ENCODE measurements at regions of chr5 and their contacts with region 1.

Region 1: DNA sequence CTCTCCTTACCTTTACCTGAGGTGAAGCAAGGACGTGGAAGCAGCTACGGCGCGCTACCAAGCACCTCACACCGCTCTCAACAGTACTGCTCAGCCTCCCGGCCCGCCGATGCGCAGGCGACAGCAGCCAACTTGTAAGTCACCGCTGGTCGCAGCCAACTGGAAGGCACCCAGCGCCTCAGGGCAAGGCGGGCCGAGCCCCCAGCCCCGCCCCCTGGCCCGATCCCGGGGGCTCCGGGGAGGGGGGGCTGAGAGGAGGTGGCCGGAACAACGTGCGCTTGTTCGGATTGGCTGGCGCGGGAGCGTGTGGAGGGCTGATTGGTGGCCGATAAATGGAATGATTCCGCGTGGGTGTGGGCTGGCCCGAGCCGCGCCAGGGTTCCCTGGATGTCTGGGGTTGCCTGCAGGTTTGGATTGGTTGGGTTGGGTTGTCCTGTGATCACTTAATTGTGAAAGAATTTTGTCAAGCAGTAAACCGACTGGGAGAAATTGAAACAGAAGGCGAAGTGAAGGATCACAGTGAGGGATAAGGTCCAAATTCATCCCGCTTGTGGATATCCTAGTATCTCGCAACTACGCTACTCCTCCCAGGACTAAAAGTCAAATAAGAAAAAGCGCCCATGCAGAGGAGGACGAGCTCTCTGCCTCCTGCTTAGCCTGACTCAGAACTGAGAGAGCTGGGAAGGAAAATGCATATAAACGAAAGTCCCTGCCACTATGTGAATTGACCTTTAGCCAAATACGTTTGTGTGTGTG is at the start of gene STARD4:
- DNase-seq: peak; percentile 95
- ATAC-seq: peak; percentile 96
- H3K4me3 ChIP-seq: peak within 1 kb of the TSS; percentile 86
- H3K27ac ChIP-seq: peak within 1 kb of the TSS; percentile 93
- H3K4me1 ChIP-seq: peaks cover 14% of the 10 kb centered on the region
- H3K27me3 ChIP-seq: no peaks in the 10 kb centered on the region
- CTCF ChIP-seq: no peak
- total RNA-seq, gene STARD4: 13.4 and 17.1 TPM in 2 replicates

Region 2: DNA sequence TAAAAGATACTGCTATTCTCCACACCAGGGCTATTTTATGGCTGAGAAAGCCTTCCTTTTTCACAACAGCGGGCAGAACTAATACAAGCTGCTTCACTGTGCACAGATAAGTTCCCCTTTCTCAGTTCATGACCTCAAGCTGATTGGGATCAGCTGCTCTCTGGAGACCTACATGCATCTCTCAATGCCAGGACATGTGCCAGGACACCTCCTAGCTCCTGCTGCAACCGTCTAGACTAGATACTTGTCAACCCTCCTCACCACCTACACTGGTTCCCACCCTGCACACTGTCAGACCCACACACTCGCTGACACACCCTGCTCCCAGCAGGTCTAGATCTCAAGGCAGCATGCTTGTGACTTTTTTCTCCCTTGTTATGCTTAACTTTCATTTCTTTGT is 40.0 kb before region 1 on chr5:
- CTCF ChIA-PET with region 1: no interaction called
- POLR2A ChIA-PET with region 1: no interaction called
- intact Hi-C with region 1: no loop called
- DNase-seq: no peak
- ATAC-seq: no peak
- H3K4me3 ChIP-seq: no peak overlapping the region
- H3K27ac ChIP-seq: no peak overlapping the region
- H3K4me1 ChIP-seq: no peaks in the 10 kb centered on the region
- H3K27me3 ChIP-seq: peaks cover 9% of the 10 kb centered on the region
- CTCF ChIP-seq: no peak

Region 3: DNA sequence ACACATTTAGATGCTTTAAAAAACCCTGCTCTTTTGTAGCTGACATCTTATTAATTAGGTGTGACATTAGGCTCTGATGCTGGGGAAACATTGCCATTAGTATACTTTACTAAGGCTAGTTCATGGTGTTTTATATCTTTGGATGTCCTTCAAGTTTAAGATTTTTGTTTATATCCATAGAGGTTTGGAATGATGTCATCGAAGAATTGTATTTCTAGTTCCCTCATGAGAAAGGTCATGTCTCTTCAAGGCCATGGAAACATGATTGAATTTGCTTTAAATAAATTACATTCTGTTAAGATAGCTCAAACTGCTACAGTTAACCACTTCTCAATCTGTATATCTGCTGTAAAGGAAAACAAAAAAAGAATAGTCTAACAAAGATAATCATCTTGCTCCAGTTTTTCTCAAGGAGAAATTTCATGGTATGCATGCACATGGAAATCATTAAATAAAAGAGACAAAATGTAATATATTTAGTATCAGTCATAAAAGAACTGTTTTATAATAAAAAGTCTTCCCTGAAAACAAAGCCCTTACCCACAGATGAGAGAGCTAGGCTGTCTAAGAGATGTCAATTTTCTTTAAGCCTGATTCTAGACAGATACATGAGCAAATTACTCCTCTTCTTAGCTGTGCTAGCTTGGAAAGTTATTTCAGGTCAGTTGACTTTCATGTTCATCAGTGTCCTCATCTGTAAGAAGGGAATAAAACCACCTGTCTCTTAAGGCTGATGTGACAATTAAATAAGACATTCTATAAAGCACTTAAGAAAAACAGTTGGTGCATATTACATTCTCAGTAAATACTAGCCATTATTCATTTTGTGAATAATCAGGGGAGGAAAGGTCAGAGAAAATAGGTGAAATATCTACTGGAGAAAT is 24.8 kb after region 1 on chr5:
- CTCF ChIA-PET with region 1: no interaction called
- POLR2A ChIA-PET with region 1: interaction called, 12 read pairs
- intact Hi-C with region 1: no loop called
- DNase-seq: no peak
- ATAC-seq: no peak
- H3K4me3 ChIP-seq: no peak overlapping the region
- H3K27ac ChIP-seq: no peak overlapping the region
- H3K4me1 ChIP-seq: no peaks in the 10 kb centered on the region
- H3K27me3 ChIP-seq: no peaks in the 10 kb centered on the region
- CTCF ChIP-seq: no peak

Measured in PC-3 (cell line).